Esophagus muscularis mucosa (tissue), 4 donors: ENCODE measurements at regions of chr10 and their contacts with region 1.

Region 1: DNA sequence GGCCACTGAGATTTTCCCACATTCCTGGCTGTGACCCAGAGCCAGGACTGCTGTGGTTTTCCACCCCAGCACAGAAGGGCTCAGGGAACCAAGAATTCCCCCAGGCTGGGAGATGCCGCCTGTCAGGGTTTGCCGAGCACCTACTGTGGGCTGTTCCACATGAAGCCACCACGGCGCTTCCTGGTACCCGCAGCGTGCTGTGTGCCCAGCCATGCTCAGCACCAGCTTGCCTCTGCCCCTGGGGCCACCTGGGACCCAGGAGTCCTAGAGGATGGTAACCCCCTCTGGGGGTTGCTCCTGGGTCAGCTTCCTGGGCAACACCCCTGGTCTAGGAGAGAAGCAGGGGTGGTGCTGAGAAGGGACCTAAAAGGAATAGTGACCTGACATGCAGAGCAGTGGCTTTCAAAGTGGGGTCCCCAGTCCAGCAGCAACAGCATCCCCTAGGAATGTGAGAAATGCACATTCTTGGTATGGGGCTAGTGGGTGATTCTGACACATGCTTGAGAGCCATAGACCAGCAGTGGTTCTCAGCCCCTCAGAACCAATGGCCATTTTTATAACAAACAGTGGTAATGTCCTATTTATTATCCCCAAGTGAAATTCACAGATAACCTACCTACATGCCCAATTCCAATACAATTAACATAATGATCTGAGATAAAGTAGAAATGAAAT is 53.4 kb downstream of the TSPAN15 start:
- DNase-seq: no peak
- H3K4me3 ChIP-seq: no peak overlapping the region
- H3K27ac ChIP-seq: peak overlapping the region in 3 of 4 donors; percentile 22 to 78 (median 45)
- H3K4me1 ChIP-seq: peaks cover 13 to 46% (median 34%) of the 10 kb centered on the region in 4 donors
- H3K27me3 ChIP-seq: no peaks in the 10 kb centered on the region
- CTCF ChIP-seq: no peak
- EP300 ChIP-seq: no peak
- POLR2A ChIP-seq: no peak

Region 2: DNA sequence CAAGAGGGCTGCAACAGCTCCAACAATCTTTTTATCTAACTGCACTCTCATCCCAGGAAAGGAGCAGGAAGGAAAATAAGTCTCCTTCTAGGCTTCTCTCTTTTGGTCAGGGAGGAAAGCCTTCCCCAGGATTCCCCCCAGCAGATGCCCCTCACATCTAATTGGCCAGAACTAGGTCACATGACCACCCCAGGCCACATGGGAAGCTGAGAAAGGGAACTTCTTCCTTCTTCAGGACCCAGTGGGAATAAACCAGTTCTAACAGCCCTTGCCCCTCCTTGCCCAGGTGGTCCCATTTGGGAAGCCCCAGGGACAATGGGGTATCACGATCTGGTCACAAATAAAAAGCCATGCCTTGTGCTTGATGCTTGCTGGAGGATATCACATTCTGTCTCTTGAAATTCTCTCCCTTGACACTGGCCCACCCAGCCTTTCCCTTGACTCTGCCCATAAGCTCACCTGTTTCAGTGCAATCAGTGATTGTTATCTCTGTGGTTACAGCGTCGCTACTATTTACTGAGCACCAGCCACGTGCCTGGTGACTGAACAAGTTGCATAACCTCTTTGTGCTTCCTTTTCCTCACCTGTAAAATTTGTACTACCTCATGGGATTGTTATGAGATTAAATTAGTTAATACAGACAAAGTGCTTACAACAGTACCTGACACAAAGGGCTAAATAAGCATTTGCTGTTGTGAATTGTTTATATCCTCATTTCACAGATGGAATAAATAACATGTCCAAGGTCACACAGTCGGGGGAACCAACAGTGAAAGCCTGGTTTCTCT is 79.0 kb before region 1 on chr10:
- intact Hi-C with region 1: loop called (anchors 1 kb)
- DNase-seq: no peak
- H3K4me3 ChIP-seq: no peak overlapping the region
- H3K27ac ChIP-seq: peak overlapping the region; percentile 95 to 98 (median 97)
- H3K4me1 ChIP-seq: peaks cover 8 to 55% (median 47%) of the 10 kb centered on the region in 4 donors
- H3K27me3 ChIP-seq: no peaks in the 10 kb centered on the region
- CTCF ChIP-seq: no peak
- EP300 ChIP-seq: no peak
- POLR2A ChIP-seq: no peak

Region 3: GRCh38 chr10:69449841-69450240 is 54.9 kb before region 1 on chr10:
- intact Hi-C with region 1: loop called (anchors 5 kb)
- DNase-seq: no peak
- H3K4me3 ChIP-seq: no peak overlapping the region
- H3K27ac ChIP-seq: peak overlapping the region; percentile 85 to 92 (median 88)
- H3K4me1 ChIP-seq: peaks cover 33 to 73% (median 69%) of the 10 kb centered on the region in 4 donors
- H3K27me3 ChIP-seq: no peaks in the 10 kb centered on the region
- CTCF ChIP-seq: peak; percentile 48 to 77 (median 64)
- EP300 ChIP-seq: no peak
- POLR2A ChIP-seq: no peak

Region 4: GRCh38 chr10:69573056-69573806 is 68.5 kb after region 1 on chr10 and contains the start of gene NEUROG3:
- intact Hi-C with region 1: no loop called
- DNase-seq: no peak
- H3K4me3 ChIP-seq: peak within 1 kb of the TSS; percentile 31 to 41 (median 38)
- H3K27ac ChIP-seq: no peak within 1 kb of the TSS
- H3K4me1 ChIP-seq: peaks cover 5 to 42% (median 34%) of the 10 kb centered on the region in 4 donors
- H3K27me3 ChIP-seq: peaks cover 0 to 99% (median 56%) of the 10 kb centered on the region in 4 donors
- CTCF ChIP-seq: no peak
- EP300 ChIP-seq: no peak
- POLR2A ChIP-seq: no peak
- total RNA-seq, gene NEUROG3: 0.66 TPM in 1 of 4 donors, not detected in the others